B cell (primary cell): ENCODE measurements at regions of chr20 and their contacts with region 1.

Region 1: GRCh38 chr20:36754656-36755222 is 8.8 kb upstream of the NDRG3 start:
- DNase-seq: peak; percentile 66
- ATAC-seq: peak; percentile 65
- H3K4me3 ChIP-seq: no peak overlapping the region
- H3K4me3 Mint-ChIP-seq: no peak overlapping the region
- H3K27ac ChIP-seq: no peak overlapping the region
- H3K27ac Mint-ChIP-seq: peak overlapping the region; percentile 37
- H3K4me1 ChIP-seq: peaks cover 29 to 30% of the 10 kb centered on the region in 2 donors
- H3K4me1 Mint-ChIP-seq: peaks cover 32% of the 10 kb centered on the region
- H3K27me3 ChIP-seq: no peaks in the 10 kb centered on the region
- H3K27me3 Mint-ChIP-seq: no peaks in the 10 kb centered on the region
- CTCF ChIP-seq: peak; percentile 76

Region 2: GRCh38 chr20:36613974-36614373 is 140.8 kb before region 1 on chr20:
- CTCF ChIA-PET with region 1: interaction called, 14 read pairs
- POLR2A ChIA-PET with region 1: no interaction called
- intact Hi-C with region 1: no loop called
- DNase-seq: no peak
- ATAC-seq: no peak
- H3K4me3 ChIP-seq: no peak overlapping the region
- H3K4me3 Mint-ChIP-seq: no peak overlapping the region
- H3K27ac ChIP-seq: no peak overlapping the region
- H3K27ac Mint-ChIP-seq: no peak overlapping the region
- H3K4me1 ChIP-seq: no peaks in the 10 kb centered on the region
- H3K4me1 Mint-ChIP-seq: no peaks in the 10 kb centered on the region
- H3K27me3 ChIP-seq: no peaks in the 10 kb centered on the region
- H3K27me3 Mint-ChIP-seq: no peaks in the 10 kb centered on the region
- CTCF ChIP-seq: no peak

Region 3: DNA sequence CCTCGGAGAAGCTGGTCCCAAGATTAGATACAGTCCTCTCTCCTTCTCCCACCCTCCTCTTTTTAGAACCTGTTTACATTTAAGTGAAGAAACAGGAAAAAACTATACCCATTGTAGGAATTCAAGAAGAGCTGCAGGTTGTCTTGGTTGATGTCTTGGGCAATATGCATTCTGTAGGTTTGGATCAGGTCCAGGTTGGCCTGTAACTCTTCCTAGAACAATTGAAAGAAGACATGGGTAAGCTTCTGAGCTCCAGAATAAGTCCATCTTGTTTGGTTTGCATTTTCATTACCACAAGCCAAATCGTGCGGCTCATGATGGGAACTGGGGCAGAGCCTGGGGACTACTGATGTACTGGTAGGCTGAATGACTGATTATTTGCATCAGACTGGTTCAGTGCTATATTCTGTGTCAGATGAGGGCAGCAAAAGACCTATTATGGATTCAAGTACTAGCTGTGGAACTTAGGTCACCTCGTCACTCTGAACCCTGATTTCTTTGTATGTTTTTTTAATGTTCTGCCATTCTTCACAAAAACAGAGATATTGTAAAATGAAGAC is 88.5 kb before region 1 on chr20:
- CTCF ChIA-PET with region 1: interaction called, 16 read pairs
- POLR2A ChIA-PET with region 1: no interaction called
- intact Hi-C with region 1: no loop called
- DNase-seq: peak; percentile 41
- ATAC-seq: no peak
- H3K4me3 ChIP-seq: no peak overlapping the region
- H3K4me3 Mint-ChIP-seq: no peak overlapping the region
- H3K27ac ChIP-seq: no peak overlapping the region
- H3K27ac Mint-ChIP-seq: no peak overlapping the region
- H3K4me1 ChIP-seq: no peaks in the 10 kb centered on the region
- H3K4me1 Mint-ChIP-seq: no peaks in the 10 kb centered on the region
- H3K27me3 ChIP-seq: no peaks in the 10 kb centered on the region
- H3K27me3 Mint-ChIP-seq: no peaks in the 10 kb centered on the region
- CTCF ChIP-seq: peak; percentile 30

Region 4: DNA sequence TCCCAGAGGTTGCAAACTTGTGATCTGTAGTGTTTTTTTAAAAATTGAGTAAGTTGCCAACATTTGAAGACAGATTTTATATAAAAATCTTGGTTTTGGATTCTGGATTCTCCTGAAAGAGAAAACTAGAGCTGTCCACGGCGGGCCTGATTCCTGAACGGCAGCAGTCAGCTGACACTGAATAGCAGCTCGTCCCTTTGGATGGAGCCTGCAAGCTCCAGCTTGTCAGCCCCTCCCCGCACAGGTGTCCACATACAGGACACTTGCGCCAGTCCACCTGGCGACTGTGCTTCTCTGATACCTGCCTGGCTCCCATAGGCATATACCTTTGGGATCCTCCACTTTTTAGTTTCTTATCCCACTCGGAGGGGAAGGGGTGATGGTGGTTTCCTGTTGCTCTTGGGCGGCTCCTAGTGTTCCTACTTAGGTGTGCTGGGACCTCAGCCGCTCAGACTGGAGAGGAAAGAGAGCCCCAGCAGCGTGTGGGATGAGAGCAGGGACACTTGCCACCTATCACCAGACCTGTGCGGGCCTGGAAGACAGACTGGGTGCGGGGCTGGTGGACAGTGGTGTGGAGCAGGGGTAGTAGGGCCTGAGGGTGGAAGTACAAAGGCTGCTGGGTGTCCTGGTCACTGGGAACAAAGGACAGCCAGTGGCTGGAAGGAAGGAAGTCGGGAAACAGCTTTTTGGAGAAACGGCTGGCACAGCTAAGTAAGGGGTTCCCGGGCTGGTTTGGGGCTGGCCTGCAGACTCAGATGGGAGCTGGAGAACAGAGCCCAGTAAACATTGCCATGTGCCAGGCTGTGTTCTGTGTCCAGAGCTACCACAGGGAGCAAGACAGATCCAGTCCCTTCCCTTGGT is 488.6 kb after region 1 on chr20:
- CTCF ChIA-PET with region 1: no interaction called
- POLR2A ChIA-PET with region 1: no interaction called
- intact Hi-C with region 1: no loop called
- DNase-seq: no peak
- ATAC-seq: no peak
- H3K4me3 ChIP-seq: no peak overlapping the region
- H3K4me3 Mint-ChIP-seq: no peak overlapping the region
- H3K27ac ChIP-seq: no peak overlapping the region
- H3K27ac Mint-ChIP-seq: no peak overlapping the region
- H3K4me1 ChIP-seq: no peaks in the 10 kb centered on the region
- H3K4me1 Mint-ChIP-seq: no peaks in the 10 kb centered on the region
- H3K27me3 ChIP-seq: no peaks in the 10 kb centered on the region
- H3K27me3 Mint-ChIP-seq: no peaks in the 10 kb centered on the region
- CTCF ChIP-seq: no peak